ENCODE measurements at regions of chr1 and their contacts with region 1.

Region 1: DNA sequence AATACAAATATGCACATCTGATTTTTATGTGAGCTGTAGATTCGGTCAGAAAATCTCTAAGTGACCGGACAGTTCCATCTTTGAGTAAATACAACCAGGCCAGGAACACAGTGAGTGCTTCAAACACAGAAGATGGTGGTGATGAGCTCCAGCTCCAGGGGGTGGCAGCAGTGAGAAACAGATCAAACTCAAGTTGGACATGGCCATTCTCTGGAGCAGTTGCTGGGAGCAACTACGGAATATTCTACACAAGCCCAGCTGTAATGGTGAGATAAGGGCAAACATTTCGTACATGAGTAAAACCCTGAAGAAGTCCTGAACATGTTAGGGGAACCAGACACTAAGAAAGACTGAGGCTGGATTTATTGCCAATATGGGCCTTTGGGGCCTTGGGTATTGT is 100.7 kb downstream of the BARHL2 start:
- DNase-seq: peak; percentile 66
- ATAC-seq: peak; percentile 91
- H3K4me3 Mint-ChIP-seq: no peak overlapping the region
- H3K27ac Mint-ChIP-seq: no peak overlapping the region
- H3K4me1 Mint-ChIP-seq: peaks cover 23% of the 10 kb centered on the region
- H3K27me3 Mint-ChIP-seq: no peaks in the 10 kb centered on the region
- CTCF ChIP-seq: 0 out of 2 replicates have a peak, but pooled peaks have one; percentile 17

Region 2: DNA sequence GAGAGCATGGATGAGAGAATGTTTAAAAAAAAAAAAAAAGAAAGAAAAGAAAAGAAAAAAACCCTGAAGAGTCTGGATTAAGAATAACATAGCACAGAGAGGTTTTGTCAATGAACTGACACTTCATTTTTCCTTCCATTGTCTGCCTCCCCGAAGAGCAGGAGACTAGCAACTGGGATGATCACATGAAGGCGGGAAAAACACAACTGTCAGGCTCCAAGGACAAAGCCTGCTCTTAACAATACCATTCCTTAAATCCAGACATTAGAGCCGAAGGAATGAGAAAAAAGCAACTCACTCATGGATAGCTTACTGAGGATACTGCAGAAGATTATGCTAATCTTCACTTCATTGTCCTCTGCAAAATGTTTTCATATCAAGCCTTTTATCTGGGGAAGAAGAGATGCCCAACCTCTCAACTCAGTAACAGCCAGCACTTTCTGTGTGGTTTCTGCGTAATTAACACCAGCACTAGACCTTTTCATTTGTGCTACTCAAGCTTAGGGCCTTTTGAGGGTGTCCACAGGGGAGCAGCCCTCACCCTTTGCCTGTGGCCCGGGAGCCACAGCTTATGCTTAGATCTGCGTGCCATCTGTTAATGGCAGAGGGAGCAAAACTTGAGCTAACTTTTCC is 81.6 kb before region 1 on chr1:
- CTCF ChIA-PET with region 1: no interaction called
- POLR2A ChIA-PET with region 1: no interaction called
- DNase-seq: no peak
- ATAC-seq: peak; percentile 86
- H3K4me3 Mint-ChIP-seq: no peak overlapping the region
- H3K27ac Mint-ChIP-seq: 0 out of 2 replicates have a peak overlapping the region, but pooled peaks have one; percentile 66
- H3K4me1 Mint-ChIP-seq: peaks cover 28% of the 10 kb centered on the region
- H3K27me3 Mint-ChIP-seq: no peaks in the 10 kb centered on the region; the same call in 1 of the 2 replicates
- CTCF ChIP-seq: no peak

Region 3: DNA sequence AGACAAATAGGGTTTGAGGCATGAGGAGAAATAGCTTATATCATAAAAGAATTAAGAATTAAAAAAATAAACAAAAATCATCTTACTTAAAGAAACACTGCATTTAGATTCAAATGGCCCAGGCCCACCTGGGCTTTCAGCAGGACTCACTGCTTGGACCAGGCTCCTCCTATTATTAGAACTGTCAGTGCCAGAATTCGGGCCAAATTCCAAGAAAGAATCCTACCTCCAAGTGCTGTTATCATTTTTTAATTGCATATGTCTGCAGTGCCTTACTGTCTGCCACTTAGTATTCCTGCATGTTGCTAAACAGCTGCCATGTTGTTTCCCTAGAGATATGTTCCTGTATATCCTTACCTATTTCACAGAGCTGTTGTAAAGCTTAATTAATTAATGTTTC is 11.3 kb before region 1 on chr1:
- CTCF ChIA-PET with region 1: interaction called, 10 read pairs
- POLR2A ChIA-PET with region 1: no interaction called
- DNase-seq: no peak
- ATAC-seq: no peak
- H3K4me3 Mint-ChIP-seq: no peak overlapping the region
- H3K27ac Mint-ChIP-seq: no peak overlapping the region
- H3K4me1 Mint-ChIP-seq: 0 out of 2 replicates have a peak, but pooled peaks cover 4% of the 10 kb centered on the region
- H3K27me3 Mint-ChIP-seq: no peaks in the 10 kb centered on the region
- CTCF ChIP-seq: no peak

Region 4: DNA sequence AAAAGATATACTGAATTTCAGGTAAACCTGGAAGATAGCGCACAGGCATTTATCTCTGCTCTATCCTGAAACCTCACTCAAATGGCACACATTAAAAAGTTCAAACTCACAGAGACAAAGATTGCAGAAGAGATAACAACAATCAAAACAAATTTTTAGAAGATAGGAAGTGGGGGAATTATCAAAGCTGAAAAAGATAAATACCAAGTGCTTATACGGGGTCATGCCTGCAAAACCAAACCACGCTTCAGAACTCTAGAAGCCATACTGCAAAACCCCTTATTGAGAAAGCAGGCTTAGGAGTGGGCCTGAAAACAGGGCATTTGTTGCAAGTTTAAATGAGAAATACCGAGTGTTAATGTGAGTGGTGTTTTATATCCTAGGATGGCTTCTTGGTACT is 23.9 kb after region 1 on chr1:
- CTCF ChIA-PET with region 1: no interaction called
- POLR2A ChIA-PET with region 1: no interaction called
- DNase-seq: no peak
- ATAC-seq: no peak
- H3K4me3 Mint-ChIP-seq: no peak overlapping the region
- H3K27ac Mint-ChIP-seq: no peak overlapping the region
- H3K4me1 Mint-ChIP-seq: peaks cover 12% of the 10 kb centered on the region
- H3K27me3 Mint-ChIP-seq: no peaks in the 10 kb centered on the region
- CTCF ChIP-seq: no peak

Region 5: GRCh38 chr1:90671741-90672140 is 55.3 kb after region 1 on chr1:
- CTCF ChIA-PET with region 1: no interaction called
- POLR2A ChIA-PET with region 1: no interaction called
- DNase-seq: no peak
- ATAC-seq: no peak
- H3K4me3 Mint-ChIP-seq: no peak overlapping the region
- H3K27ac Mint-ChIP-seq: no peak overlapping the region
- H3K4me1 Mint-ChIP-seq: no peaks in the 10 kb centered on the region
- H3K27me3 Mint-ChIP-seq: no peaks in the 10 kb centered on the region
- CTCF ChIP-seq: no peak

Region 6: DNA sequence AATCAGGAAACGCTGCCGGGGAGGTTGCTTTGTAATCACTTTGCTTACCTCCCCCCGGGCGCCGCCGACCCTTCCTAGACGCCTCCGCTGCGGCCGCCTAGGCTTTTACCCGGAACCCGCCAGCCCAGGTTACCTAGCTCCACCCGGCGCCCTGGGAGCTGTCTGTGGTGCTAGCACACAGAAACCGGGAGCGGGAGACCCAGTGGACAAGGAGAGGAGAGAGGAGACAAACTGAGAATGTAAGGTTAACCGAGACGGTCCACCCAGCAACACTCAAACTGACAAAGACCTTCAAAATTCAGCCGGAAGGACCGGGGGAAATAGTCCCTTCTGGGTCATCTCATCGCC is 90.9 kb after region 1 on chr1:
- CTCF ChIA-PET with region 1: interaction called, 33 read pairs
- POLR2A ChIA-PET with region 1: no interaction called
- DNase-seq: peak; percentile 87
- ATAC-seq: peak; percentile 73
- H3K4me3 Mint-ChIP-seq: peak overlapping the region; percentile 71
- H3K27ac Mint-ChIP-seq: no peak overlapping the region
- H3K4me1 Mint-ChIP-seq: peaks cover 68% of the 10 kb centered on the region
- H3K27me3 Mint-ChIP-seq: peaks cover 96% of the 10 kb centered on the region
- CTCF ChIP-seq: no peak

Measured in WTC11 (cell line).